Caco-2 (cell line): ENCODE measurements at regions of chr2 and their contacts with region 1.

Region 1: GRCh38 chr2:182792441-182792840 is 74.0 kb downstream of the FRZB start:
- DNase-seq: no peak
- H3K4me3 ChIP-seq: no peak overlapping the region
- H3K4me3 Mint-ChIP-seq: no peak overlapping the region
- H3K27ac Mint-ChIP-seq: no peak overlapping the region
- H3K4me1 ChIP-seq: no peaks in the 10 kb centered on the region
- H3K4me1 Mint-ChIP-seq: no peaks in the 10 kb centered on the region
- H3K27me3 ChIP-seq: no peaks in the 10 kb centered on the region
- H3K27me3 Mint-ChIP-seq: no peaks in the 10 kb centered on the region
- CTCF ChIP-seq: no peak

Region 2: DNA sequence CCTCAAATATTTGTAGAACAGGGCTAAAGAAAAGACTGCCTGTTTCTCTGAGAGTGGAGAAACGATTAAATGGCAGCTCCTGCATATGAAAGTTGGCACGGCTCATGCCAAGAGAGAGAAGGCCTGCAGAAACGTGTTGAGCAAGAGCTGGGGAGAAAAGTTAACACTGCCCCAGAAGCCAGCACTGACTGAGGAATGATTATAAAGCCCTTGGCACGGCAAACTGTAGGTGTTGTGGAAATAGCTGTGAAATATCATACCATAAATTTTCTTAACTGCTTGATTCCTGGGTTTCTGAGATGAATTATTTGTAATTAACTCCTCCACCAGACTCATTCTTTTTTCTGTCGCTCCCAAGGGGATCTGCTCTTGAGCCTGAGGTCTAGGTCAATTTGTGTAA is 69.7 kb after region 1 on chr2:
- CTCF ChIA-PET with region 1: no interaction called
- POLR2A ChIA-PET with region 1: no interaction called
- intact Hi-C with region 1: loop called (anchors 5 kb)
- DNase-seq: no peak
- H3K4me3 ChIP-seq: no peak overlapping the region
- H3K4me3 Mint-ChIP-seq: no peak overlapping the region
- H3K27ac Mint-ChIP-seq: no peak overlapping the region
- H3K4me1 ChIP-seq: peaks cover 22% of the 10 kb centered on the region; the same call in 1 of the 2 replicates
- H3K4me1 Mint-ChIP-seq: peaks cover 20% of the 10 kb centered on the region
- H3K27me3 ChIP-seq: no peaks in the 10 kb centered on the region
- H3K27me3 Mint-ChIP-seq: no peaks in the 10 kb centered on the region
- CTCF ChIP-seq: no peak